ENCODE measurements at regions of chr11 and their contacts with region 1.

Region 1: DNA sequence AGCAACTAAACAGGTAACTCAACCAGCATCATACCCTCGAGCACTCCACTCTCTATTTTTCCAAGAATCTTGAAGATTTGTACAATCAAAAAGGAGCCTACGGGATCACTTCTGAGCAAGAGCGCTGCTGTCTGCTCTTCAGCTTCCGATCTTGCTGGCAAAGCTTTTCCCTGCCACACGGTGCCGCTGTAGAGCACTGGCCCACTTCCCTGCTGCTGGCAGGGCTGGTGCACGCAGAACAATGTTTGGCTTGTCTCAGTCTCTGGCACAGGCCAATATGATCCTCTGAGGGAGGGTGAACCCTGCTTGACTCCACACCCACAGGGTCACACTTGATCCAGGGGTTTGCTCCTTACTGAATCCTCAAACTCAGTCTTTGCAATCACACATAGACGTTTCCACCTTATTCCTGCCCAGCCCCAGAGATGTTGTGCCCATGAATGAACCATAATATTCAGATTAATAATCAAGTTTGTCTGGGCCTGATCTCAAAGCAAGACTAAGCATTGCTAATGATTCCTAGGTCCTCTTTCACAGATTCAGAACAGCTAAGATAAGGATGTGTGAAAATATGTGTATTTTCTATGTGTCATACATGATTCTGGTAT is 536.6 kb downstream of the SOX6 start:
- DNase-seq: peak; percentile 58
- H3K4me3 ChIP-seq: no peak overlapping the region
- H3K27ac ChIP-seq: no peak overlapping the region
- H3K4me1 ChIP-seq: no peaks in the 10 kb centered on the region
- H3K27me3 ChIP-seq: no peaks in the 10 kb centered on the region
- CTCF ChIP-seq: peak; percentile 73

Region 2: GRCh38 chr11:15276621-15277020 is 543.2 kb before region 1 on chr11:
- CTCF ChIA-PET with region 1: no interaction called
- POLR2A ChIA-PET with region 1: no interaction called
- intact Hi-C with region 1: loop called (anchors 10 kb)
- DNase-seq: peak; percentile 76
- H3K4me3 ChIP-seq: no peak overlapping the region
- H3K27ac ChIP-seq: peak overlapping the region; percentile 7
- H3K4me1 ChIP-seq: peaks cover 20% of the 10 kb centered on the region
- H3K27me3 ChIP-seq: no peaks in the 10 kb centered on the region
- CTCF ChIP-seq: peak; percentile 63

Region 3: DNA sequence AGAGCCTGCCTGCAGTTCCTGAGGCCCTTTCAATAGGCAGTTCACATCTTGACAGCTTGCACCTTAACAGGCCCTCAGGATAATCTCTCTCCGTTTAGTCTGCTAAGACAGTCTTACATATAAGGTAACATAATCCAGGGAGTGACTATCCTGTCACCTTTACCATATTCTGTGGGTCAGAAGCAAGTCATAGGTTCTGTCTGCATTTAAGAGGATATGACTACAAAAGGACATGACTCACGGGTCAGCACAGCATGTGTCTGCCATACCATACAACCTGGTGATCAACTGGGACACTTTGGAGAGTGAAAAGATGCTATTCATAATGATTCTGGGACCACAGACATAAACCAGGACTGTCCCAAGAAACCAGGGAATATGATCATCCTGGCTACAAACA is 74.5 kb before region 1 on chr11:
- CTCF ChIA-PET with region 1: no interaction called
- POLR2A ChIA-PET with region 1: no interaction called
- intact Hi-C with region 1: no loop called
- DNase-seq: no peak
- H3K4me3 ChIP-seq: no peak overlapping the region
- H3K27ac ChIP-seq: no peak overlapping the region
- H3K4me1 ChIP-seq: no peaks in the 10 kb centered on the region
- H3K27me3 ChIP-seq: peaks cover 3% of the 10 kb centered on the region
- CTCF ChIP-seq: no peak